Calu3 (cell line): ENCODE measurements at regions of chrX and their contacts with region 1.

Region 1: DNA sequence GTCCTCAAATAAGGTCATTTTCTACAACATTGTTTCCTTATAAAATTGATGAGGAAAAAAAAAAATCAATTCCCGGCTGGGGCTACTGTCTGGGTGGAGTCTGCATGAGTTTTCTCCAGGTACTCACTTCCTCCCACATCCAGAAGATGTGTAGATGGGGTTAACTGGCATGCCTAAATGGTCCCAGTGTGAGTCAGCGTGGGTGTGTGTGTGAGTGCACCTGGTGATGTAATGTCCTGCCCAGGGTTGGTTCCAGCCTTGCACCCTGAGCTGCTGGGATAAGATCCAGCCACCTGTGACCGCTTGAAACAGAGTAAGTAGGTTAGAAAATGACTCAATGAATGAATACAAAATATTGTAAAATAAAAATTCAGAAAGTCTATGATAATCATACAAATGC is 11.1 kb downstream of the USP26 start:
- DNase-seq: peak; percentile 69
- H3K4me3 Mint-ChIP-seq: no peak overlapping the region
- H3K27ac Mint-ChIP-seq: peak overlapping the region; percentile 44
- H3K4me1 Mint-ChIP-seq: peaks cover 36% of the 10 kb centered on the region
- H3K27me3 Mint-ChIP-seq: no peaks in the 10 kb centered on the region
- CTCF ChIP-seq: no peak

Region 2: GRCh38 chrX:132692066-132692465 is 393.7 kb before region 1 on chrX:
- CTCF ChIA-PET with region 1: no interaction called
- intact Hi-C with region 1: no loop called
- DNase-seq: no peak
- H3K4me3 Mint-ChIP-seq: no peak overlapping the region
- H3K27ac Mint-ChIP-seq: no peak overlapping the region
- H3K4me1 Mint-ChIP-seq: no peaks in the 10 kb centered on the region
- H3K27me3 Mint-ChIP-seq: no peaks in the 10 kb centered on the region
- CTCF ChIP-seq: no peak

Region 3: DNA sequence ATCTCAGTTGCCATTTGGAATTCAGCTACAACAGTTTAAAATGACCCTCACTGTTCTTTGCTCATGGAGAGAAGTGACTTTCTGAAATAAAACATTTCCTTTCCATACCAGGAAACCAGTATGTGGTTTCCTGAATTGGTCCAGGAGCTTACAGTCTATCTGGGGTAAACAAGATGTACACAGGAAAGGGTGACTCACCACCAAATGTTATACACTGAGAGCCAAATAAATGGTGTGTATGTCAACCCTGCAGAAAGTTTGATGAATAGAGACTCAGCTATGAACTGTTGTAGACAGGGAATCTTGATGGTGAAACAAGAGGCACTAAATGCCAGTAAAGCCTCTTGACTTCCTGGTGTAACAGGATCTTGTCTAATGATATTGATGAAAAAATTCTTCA is 227.8 kb before region 1 on chrX:
- CTCF ChIA-PET with region 1: no interaction called
- intact Hi-C with region 1: no loop called
- DNase-seq: peak; percentile 3
- H3K4me3 Mint-ChIP-seq: no peak overlapping the region
- H3K27ac Mint-ChIP-seq: peak overlapping the region; percentile 40
- H3K4me1 Mint-ChIP-seq: peaks cover 31% of the 10 kb centered on the region
- H3K27me3 Mint-ChIP-seq: no peaks in the 10 kb centered on the region
- CTCF ChIP-seq: no peak

Region 4: DNA sequence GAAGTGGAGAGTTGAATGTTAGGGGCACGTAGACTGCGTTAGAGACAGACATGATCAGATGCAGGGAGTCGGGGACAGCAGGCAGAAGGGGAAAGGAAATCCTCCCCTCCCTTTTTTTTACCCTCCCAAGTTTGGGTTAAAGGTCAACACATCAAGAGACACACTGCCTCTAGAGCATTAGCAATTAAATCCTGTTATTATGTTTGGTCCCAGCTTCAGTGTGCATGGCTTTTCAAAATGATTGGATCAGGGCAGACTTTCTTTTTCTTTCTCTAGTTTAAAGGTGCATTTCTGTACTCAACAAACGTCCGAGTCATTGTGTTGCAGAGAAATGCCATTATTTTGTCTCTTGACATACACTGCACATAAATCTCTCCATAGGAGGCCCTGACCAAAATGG is 52.8 kb before region 1 on chrX:
- CTCF ChIA-PET with region 1: no interaction called
- intact Hi-C with region 1: no loop called
- DNase-seq: no peak
- H3K4me3 Mint-ChIP-seq: no peak overlapping the region
- H3K27ac Mint-ChIP-seq: no peak overlapping the region
- H3K4me1 Mint-ChIP-seq: no peaks in the 10 kb centered on the region
- H3K27me3 Mint-ChIP-seq: peaks cover 18% of the 10 kb centered on the region
- CTCF ChIP-seq: no peak

Region 5: GRCh38 chrX:133053861-133054598 is 31.8 kb before region 1 on chrX:
- CTCF ChIA-PET with region 1: interaction called, 6 read pairs
- intact Hi-C with region 1: loop called (anchors 5 kb)
- DNase-seq: no peak
- H3K4me3 Mint-ChIP-seq: no peak overlapping the region
- H3K27ac Mint-ChIP-seq: peak overlapping the region; percentile 87
- H3K4me1 Mint-ChIP-seq: peaks cover 53% of the 10 kb centered on the region
- H3K27me3 Mint-ChIP-seq: no peaks in the 10 kb centered on the region
- CTCF ChIP-seq: no peak

Region 6: GRCh38 chrX:133151336-133151735 is 65.6 kb after region 1 on chrX:
- CTCF ChIA-PET with region 1: no interaction called
- intact Hi-C with region 1: loop called (anchors 5 kb)
- DNase-seq: peak; percentile 65
- H3K4me3 Mint-ChIP-seq: no peak overlapping the region
- H3K27ac Mint-ChIP-seq: peak overlapping the region; percentile 85
- H3K4me1 Mint-ChIP-seq: peaks cover 20% of the 10 kb centered on the region
- H3K27me3 Mint-ChIP-seq: no peaks in the 10 kb centered on the region
- CTCF ChIP-seq: no peak